SK-N-SH (cell line): ENCODE measurements at regions of chr9 and their contacts with region 1.

Region 1: DNA sequence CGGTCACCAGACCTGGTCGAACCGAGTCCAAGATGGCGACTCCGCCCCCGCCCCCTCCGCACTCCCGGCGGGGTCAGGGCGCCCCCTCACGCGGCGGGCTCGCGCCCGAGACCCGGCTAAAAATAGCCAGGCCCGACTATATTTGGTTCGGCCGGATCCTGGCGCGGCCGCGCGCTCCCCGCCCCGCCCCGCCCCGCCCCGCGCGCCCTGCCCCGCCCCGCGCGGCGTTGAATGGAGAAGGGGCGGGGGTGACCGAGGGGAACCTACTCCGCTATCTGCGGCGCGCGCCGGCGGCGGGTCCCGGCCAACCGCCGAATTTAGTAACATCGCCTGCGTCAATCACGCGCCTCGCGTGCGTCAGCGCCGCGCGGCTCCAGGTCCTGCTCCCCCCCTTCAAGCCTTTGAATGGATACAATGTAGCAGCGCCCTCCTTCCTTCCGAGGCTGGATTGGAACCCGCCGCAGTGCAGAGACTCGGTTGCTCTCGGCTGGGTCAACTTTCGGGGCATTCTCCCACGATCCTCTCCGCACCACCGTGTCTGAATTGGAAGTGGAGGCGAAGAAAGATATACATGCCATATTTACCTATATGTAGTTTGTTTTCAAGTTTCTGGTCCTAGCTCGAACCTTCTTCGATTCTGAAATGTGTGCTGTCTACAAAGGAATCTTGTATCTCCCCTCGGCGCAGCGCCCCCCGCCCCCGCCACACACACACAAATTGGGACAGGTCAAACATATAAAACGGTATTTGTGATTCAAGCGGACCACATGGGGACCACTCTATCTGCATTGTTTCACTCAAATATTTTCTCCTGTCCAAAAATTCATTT is 1.6 kb upstream of the NR4A3 start:
- DNase-seq: peak; percentile 93
- H3K4me3 ChIP-seq: peak overlapping the region; percentile 91 to 97
- H3K27ac ChIP-seq: peak overlapping the region; percentile 95 to 97
- H3K4me1 ChIP-seq: peaks cover 21 to 22% of the 10 kb centered on the region in 2 experiments; a peak in 3 of 4 replicates
- H3K27me3 ChIP-seq: no peaks in the 10 kb centered on the region
- CTCF ChIP-seq: peak; percentile 25; the same call in 1 of the 2 replicates
- EP300 ChIP-seq: peak in 1 of 2 experiments; percentile 30; a peak in 1 of 4 replicates
- RAD21 ChIP-seq: peak; percentile 40; the same call in 1 of the 2 replicates

Region 2: GRCh38 chr9:99465231-99465907 is 354.7 kb before region 1 on chr9:
- CTCF ChIA-PET with region 1: interaction called, 4 read pairs
- POLR2A ChIA-PET with region 1: interaction called, 13 read pairs
- DNase-seq: peak; percentile 71
- H3K4me3 ChIP-seq: no peak overlapping the region; a peak in 1 of 4 replicates
- H3K27ac ChIP-seq: peak overlapping the region in 1 of 2 experiments; percentile 100; a peak in 3 of 4 replicates
- H3K4me1 ChIP-seq: peaks cover 13 to 38% of the 10 kb centered on the region in 2 experiments; a peak in 3 of 4 replicates
- H3K27me3 ChIP-seq: no peaks in the 10 kb centered on the region
- CTCF ChIP-seq: no peak
- EP300 ChIP-seq: peak in 1 of 2 experiments; percentile 99; a peak in 2 of 4 replicates
- RAD21 ChIP-seq: peak; percentile 57